ENCODE measurements at regions of chr16 and their contacts with region 1.

Region 1: DNA sequence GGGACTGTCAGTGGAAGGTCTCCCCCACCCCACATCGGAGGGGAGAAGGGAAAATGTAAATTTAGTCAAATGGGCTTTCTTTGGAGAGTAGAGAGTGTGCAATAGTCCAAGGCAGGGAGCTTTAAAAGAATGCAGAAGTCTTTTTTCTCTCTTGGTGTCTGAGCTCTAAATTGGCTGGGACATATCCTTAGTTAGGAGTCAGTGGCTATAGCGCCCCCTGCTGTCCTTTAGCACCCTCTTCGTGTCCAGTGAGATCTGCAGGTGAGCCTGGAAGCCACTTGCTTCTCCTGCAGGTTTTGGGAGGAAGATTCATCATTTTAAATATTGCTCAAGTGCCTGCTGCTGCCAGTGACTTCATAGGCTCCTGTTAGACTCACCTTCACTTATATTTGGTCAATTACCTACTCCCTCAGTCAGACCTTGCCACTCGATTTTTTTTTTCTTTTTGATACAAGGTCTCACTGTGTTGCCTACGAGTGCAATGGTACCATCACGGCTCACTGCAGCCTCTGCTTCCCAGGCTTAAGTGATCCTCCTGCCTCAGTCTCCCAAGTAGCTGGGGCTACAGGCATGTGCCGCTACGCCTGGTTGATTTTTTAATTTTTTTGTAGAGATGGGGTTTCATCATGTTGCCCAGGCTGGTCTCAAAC is 174.8 kb downstream of the PRKCB start:
- DNase-seq: peak; percentile 16 to 18
- ATAC-seq: no peak
- H3K4me3 ChIP-seq: no peak overlapping the region
- H3K27ac ChIP-seq: no peak overlapping the region
- H3K4me1 ChIP-seq: no peaks in the 10 kb centered on the region
- H3K27me3 ChIP-seq: no peaks in the 10 kb centered on the region
- CTCF ChIP-seq: peak in 3 of 5 experiments; percentile 24 to 49 (median 32)
- POLR2A ChIP-seq: no peak

Region 2: DNA sequence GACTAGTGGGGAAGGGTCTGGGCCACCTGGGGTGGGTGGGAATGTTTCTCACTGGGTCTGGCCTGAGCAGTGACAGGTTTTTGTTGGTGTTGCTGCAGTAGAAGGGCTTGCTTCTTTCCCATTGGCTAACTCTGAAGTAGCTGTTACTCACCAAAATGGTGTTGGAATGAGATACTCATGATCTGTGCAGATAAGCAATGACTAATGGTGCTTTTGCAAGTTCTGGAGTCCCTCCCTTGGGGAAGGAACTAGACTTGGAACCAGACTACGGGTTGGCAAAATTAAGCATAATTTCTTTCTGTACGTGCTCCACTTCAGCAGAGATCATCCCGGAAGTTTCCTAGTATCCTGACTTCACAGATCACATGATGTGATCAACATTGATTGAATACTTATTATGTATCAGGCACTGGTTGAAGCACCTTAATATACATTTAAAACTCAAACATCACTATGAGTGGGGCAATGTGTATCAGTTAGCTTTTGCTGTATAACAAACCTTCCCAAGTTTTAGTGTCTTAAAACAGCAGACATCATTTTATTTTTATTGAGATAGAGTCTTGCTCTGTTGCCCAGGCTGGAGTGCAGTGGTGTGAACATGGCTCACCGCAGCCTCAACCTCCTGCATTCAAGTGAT is 225.6 kb before region 1 on chr16:
- in situ Hi-C with region 1: loop called in 1 of 4 experiments (anchors 25 kb)
- intact Hi-C with region 1: no loop called
- DNase-seq: no peak
- ATAC-seq: no peak
- H3K4me3 ChIP-seq: no peak overlapping the region
- H3K27ac ChIP-seq: no peak overlapping the region
- H3K4me1 ChIP-seq: no peaks in the 10 kb centered on the region
- H3K27me3 ChIP-seq: no peaks in the 10 kb centered on the region
- CTCF ChIP-seq: no peak
- POLR2A ChIP-seq: no peak

Region 3: DNA sequence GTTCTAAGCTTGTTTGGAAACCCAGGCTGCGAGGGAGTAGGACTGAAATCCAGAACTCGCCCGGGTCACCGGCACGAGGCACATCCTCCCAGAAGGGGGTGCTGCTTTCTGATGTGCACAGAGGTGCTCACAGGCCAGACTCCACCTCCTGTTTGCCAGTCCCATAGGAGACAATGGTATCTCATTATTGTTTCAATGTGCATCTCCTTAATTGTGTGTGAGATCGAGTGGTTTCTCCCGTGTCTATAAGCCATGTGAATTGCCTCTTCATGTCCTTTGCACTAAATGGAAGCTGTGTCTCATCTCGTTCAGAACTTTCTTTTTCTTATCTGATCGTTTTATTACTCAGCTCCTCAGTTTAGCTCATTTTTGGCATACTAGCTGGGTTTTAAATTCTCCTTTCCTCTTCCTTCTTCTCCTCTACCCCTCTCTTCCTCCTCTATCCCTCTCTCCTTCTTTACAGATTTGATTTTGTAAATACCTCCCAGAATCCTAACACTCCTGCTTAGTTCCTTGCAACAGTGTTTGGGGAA is 206.9 kb before region 1 on chr16:
- in situ Hi-C with region 1: loop called in 1 of 4 experiments (anchors 25 kb)
- intact Hi-C with region 1: loop called (anchors 10 kb)
- DNase-seq: peak in 1 of 2 donors; percentile 12
- ATAC-seq: no peak
- H3K4me3 ChIP-seq: no peak overlapping the region
- H3K27ac ChIP-seq: no peak overlapping the region
- H3K4me1 ChIP-seq: no peaks in the 10 kb centered on the region
- H3K27me3 ChIP-seq: no peaks in the 10 kb centered on the region
- CTCF ChIP-seq: no peak
- POLR2A ChIP-seq: no peak